ENCODE measurements at regions of chr2 and their contacts with region 1.

Region 1: DNA sequence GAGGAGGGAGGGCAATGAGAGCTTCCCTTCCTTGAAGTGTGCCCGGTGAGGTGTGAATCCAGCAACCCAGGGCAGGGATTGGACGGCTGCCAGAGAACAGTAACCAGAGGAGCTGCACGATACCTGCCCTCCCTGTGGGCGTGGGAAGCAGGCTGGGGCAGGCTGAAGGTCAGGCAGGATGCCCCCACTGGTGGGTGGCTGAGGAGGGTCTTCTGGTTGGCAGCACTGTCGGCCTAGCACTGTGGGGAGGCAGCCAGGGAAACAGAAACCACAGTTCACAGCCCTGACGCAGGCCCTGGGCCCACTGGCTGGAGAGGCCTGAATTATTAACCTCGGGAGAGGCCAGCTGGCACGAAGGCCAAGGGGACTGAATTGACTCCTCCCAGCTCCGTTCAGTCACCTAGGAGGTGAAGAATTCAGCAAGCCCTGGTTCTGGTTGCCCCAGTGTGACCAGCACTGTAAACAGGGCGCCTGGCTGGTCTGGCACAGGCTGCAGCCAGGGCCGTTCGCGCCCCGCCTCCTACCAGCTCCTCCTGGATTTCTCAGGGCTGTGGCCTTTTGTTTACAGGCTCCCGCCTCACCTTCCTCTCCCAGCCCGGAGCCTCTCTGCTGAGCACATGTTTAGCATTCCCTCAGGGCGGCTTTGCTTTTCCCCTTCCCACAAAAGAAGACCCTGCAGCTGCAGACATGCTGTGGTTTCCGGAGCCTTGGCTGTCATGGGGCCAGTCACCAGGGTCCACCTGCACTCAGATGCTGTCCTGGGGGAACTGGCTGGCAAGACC is 97.8 kb downstream of the B3GNT2 start:
- DNase-seq: peak; percentile 92 to 97 (median 96)
- ATAC-seq: peak; percentile 91
- H3K4me3 ChIP-seq: no peak overlapping the region
- H3K27ac ChIP-seq: peak overlapping the region; percentile 87 to 99 (median 94)
- H3K4me1 ChIP-seq: peaks cover 37% of the 10 kb centered on the region
- H3K27me3 ChIP-seq: no peaks in the 10 kb centered on the region
- CTCF ChIP-seq: peak in 2 of 7 experiments; percentile 12 to 21
- POLR2A ChIP-seq: peak; percentile 20 to 65 (median 63)

Region 2: GRCh38 chr2:62202019-62202722 is 91.5 kb before region 1 on chr2:
- intact Hi-C with region 1: loop called (anchors 10 kb)
- DNase-seq: no peak
- ATAC-seq: no peak
- H3K4me3 ChIP-seq: no peak overlapping the region
- H3K27ac ChIP-seq: no peak overlapping the region
- H3K4me1 ChIP-seq: peaks cover 59% of the 10 kb centered on the region
- H3K27me3 ChIP-seq: no peaks in the 10 kb centered on the region
- CTCF ChIP-seq: no peak
- POLR2A ChIP-seq: no peak